Dorsolateral prefrontal cortex (tissue), 120 donors: ENCODE measurements at regions of chr13 and their contacts with region 1.

Region 1: GRCh38 chr13:26707122-26708006 is 53.2 kb downstream of the GPR12 start:
- DNase-seq: peak in 7 of 10 donors; percentile 48 to 79 (median 60)
- H3K4me3 ChIP-seq: no peak overlapping the region
- H3K27ac ChIP-seq: no peak overlapping the region
- H3K27me3 ChIP-seq: no peaks in the 10 kb centered on the region
- CTCF ChIP-seq: peak; percentile 37 to 88 (median 78)

Region 2: GRCh38 chr13:26335158-26335557 is 372.2 kb before region 1 on chr13:
- intact Hi-C with region 1: no loop called
- DNase-seq: no peak
- H3K4me3 ChIP-seq: no peak overlapping the region
- H3K27ac ChIP-seq: no peak overlapping the region
- H3K27me3 ChIP-seq: no peaks in the 10 kb centered on the region
- CTCF ChIP-seq: no peak

Region 3: DNA sequence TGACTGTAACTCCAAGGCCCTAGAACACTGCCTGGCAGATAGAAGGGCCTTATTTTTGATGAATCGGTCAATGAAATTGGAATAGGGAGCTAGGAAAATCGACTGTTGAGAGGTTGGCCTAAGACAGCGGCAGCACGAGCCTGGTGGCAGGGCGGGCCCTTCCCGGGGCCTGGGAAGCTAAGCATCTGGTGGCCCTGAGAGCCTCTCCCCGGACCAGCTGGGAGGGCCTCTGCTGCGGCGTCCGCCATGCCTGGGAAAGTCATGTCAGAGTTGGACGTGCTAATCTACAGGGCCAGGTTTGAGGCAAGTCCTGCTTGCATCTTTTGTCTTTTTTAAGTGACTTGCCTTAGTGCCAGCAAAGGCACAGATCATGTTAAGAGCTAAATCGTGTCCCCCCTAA is 64.4 kb after region 1 on chr13:
- intact Hi-C with region 1: no loop called
- DNase-seq: no peak
- H3K4me3 ChIP-seq: no peak overlapping the region
- H3K27ac ChIP-seq: no peak overlapping the region
- H3K27me3 ChIP-seq: peaks cover 0 to 3% (median 0%) of the 10 kb centered on the region in 45 donors
- CTCF ChIP-seq: no peak

Region 4: GRCh38 chr13:26929971-26930730 is 222.8 kb after region 1 on chr13:
- intact Hi-C with region 1: loop called (anchors 1 to 5 kb)
- DNase-seq: peak; percentile 67 to 84 (median 78)
- H3K4me3 ChIP-seq: peak overlapping the region in 39 of 59 donors; percentile 4 to 56 (median 36)
- H3K27ac ChIP-seq: peak overlapping the region in 8 of 59 donors; percentile 9 to 65 (median 48)
- H3K27me3 ChIP-seq: peaks cover 0 to 2% (median 0%) of the 10 kb centered on the region in 45 donors
- CTCF ChIP-seq: peak; percentile 71 to 99 (median 97)